ENCODE measurements at regions of chr20 and their contacts with region 1.

Region 1: GRCh38 chr20:31496761-31497295 is 17.4 kb upstream of the HM13 start:
- DNase-seq: no peak
- ATAC-seq: no peak
- H3K4me3 Mint-ChIP-seq: no peak overlapping the region
- H3K27ac Mint-ChIP-seq: no peak overlapping the region
- H3K4me1 Mint-ChIP-seq: no peaks in the 10 kb centered on the region
- H3K27me3 Mint-ChIP-seq: peaks cover 8% of the 10 kb centered on the region

Region 2: GRCh38 chr20:31452575-31452974 is 44.3 kb before region 1 on chr20:
- CTCF ChIA-PET with region 1: interaction called, 14 read pairs
- POLR2A ChIA-PET with region 1: no interaction called
- intact Hi-C with region 1: no loop called
- DNase-seq: no peak
- ATAC-seq: no peak
- H3K4me3 Mint-ChIP-seq: no peak overlapping the region
- H3K27ac Mint-ChIP-seq: no peak overlapping the region
- H3K4me1 Mint-ChIP-seq: no peaks in the 10 kb centered on the region
- H3K27me3 Mint-ChIP-seq: peaks cover 13% of the 10 kb centered on the region

Region 3: DNA sequence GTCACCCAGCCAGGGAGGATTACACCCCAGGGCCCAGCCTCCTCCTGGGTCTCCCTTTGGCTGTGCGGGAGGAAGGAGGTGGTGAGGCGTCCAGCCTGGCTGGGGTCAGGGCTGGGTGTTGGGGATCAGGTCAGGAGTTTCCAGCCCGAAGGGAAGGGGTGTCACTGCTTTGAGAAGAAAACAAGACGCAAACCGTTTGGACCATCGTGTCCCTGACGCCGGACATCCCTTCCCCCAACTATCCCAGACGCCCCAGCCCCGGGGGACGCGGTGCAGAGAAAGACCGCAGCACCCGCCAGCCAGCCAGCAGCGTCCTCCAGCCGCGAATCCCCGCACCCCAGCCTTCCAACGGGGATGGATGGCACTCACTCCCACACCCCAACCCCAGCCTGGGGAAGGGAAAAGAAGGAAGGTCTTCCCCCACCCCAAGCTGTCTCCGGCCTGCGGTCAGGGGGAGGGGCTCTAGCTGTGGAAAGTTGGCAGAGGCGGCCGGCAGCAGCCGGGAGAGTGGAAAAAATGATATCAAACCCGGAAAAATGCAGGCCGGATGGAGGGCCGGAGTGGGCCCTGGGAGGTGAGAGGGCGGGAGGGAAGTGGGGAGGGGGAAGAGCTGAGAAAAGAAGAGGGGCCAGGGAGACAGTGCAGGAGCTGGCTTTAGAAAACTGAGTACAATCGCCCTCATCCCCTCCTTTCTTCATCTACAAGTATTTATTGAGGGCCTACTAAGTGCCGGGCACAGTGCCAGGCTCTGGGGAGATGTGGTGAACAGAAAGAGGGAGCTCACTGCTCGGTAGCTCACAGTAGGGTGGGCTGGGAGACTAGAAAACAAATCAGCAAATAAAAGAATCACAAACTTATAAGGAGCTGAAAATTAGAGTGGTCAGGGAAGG is 11.1 kb before region 1 on chr20:
- CTCF ChIA-PET with region 1: interaction called, 22 read pairs
- POLR2A ChIA-PET with region 1: no interaction called
- intact Hi-C with region 1: no loop called
- DNase-seq: peak; percentile 40
- ATAC-seq: no peak
- H3K4me3 Mint-ChIP-seq: no peak overlapping the region
- H3K27ac Mint-ChIP-seq: no peak overlapping the region
- H3K4me1 Mint-ChIP-seq: peaks cover 9% of the 10 kb centered on the region
- H3K27me3 Mint-ChIP-seq: peaks cover 26% of the 10 kb centered on the region

Region 4: GRCh38 chr20:31514159-31515071 is 17.6 kb after region 1 on chr20 and contains the start of gene HM13:
- CTCF ChIA-PET with region 1: interaction called, 21 read pairs
- POLR2A ChIA-PET with region 1: no interaction called
- intact Hi-C with region 1: no loop called
- DNase-seq: peak; percentile 93
- ATAC-seq: peak; percentile 79
- H3K4me3 Mint-ChIP-seq: no peak within 1 kb of the TSS
- H3K27ac Mint-ChIP-seq: peak within 1 kb of the TSS; percentile 58
- H3K4me1 Mint-ChIP-seq: peaks cover 6% of the 10 kb centered on the region
- H3K27me3 Mint-ChIP-seq: no peaks in the 10 kb centered on the region
- total RNA-seq, gene HM13: 108 to 111 TPM